ENCODE measurements at regions of chr10 and their contacts with region 1.

Region 1: GRCh38 chr10:12782537-12782936 is 219.0 kb downstream of the CCDC3 start:
- DNase-seq: peak; percentile 65
- ATAC-seq: no peak
- H3K4me3 Mint-ChIP-seq: no peak overlapping the region
- H3K27ac Mint-ChIP-seq: peak overlapping the region; percentile 48
- H3K4me1 Mint-ChIP-seq: peaks cover 38% of the 10 kb centered on the region
- H3K27me3 Mint-ChIP-seq: no peaks in the 10 kb centered on the region

Region 2: DNA sequence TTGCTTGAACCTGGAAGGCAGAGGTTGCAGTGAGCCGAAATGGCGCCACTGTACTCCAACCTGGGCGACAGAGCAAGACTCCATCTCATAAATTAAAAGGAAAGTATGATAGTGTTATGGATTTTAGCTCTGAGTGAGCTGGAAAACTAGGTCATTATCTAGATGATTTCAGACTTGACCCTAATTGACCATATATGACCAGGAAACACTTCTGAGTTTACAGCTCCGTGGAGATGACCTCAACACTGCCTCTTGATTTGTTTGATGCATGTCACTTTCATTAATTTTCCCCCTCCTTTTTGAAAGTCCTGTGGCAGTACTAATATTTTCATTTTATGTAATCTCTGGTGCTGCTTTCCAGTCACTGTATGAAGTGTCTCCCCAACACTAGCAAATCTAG is 660.9 kb before region 1 on chr10:
- CTCF ChIA-PET with region 1: no interaction called
- POLR2A ChIA-PET with region 1: no interaction called
- intact Hi-C with region 1: loop called in 1 of 2 experiments (anchors 2 kb)
- DNase-seq: no peak
- ATAC-seq: no peak
- H3K4me3 Mint-ChIP-seq: peak overlapping the region; percentile 54
- H3K27ac Mint-ChIP-seq: peak overlapping the region; percentile 94
- H3K4me1 Mint-ChIP-seq: peaks cover 32% of the 10 kb centered on the region
- H3K27me3 Mint-ChIP-seq: no peaks in the 10 kb centered on the region

Region 3: GRCh38 chr10:12720217-12720981 is 62.1 kb before region 1 on chr10:
- CTCF ChIA-PET with region 1: interaction called, 3 read pairs
- POLR2A ChIA-PET with region 1: no interaction called
- intact Hi-C with region 1: loop called in 1 of 2 experiments (anchors 2 kb)
- DNase-seq: peak; percentile 77
- ATAC-seq: peak; percentile 86
- H3K4me3 Mint-ChIP-seq: no peak overlapping the region
- H3K27ac Mint-ChIP-seq: peak overlapping the region; percentile 67
- H3K4me1 Mint-ChIP-seq: peaks cover 44% of the 10 kb centered on the region
- H3K27me3 Mint-ChIP-seq: no peaks in the 10 kb centered on the region

Region 4: GRCh38 chr10:12729885-12730284 is 52.7 kb before region 1 on chr10:
- CTCF ChIA-PET with region 1: interaction called, 3 read pairs
- POLR2A ChIA-PET with region 1: no interaction called
- intact Hi-C with region 1: loop called in 1 of 2 experiments (anchors 2 kb)
- DNase-seq: peak; percentile 46
- ATAC-seq: no peak
- H3K4me3 Mint-ChIP-seq: no peak overlapping the region
- H3K27ac Mint-ChIP-seq: no peak overlapping the region
- H3K4me1 Mint-ChIP-seq: peaks cover 14% of the 10 kb centered on the region
- H3K27me3 Mint-ChIP-seq: no peaks in the 10 kb centered on the region

Region 5: DNA sequence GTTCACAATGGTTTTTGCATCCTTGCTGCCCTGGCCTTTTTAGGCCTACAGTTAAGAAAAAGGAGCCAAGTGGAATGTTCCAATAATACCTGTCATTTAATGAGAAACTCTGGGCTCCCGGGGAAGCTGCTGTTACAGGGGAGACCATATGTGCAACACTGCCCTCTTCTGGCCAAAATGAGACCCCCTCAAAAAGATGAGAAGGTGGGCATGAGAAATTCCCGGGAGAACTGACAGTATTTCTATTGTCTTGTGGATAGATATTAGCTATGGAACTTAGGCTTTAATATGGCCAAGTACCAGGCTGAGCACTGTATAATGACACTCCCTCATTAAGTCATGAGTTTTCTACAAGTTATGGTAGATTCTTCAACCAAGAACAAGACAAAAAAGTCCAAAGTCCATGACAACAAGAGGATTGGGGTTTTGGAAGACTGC is 119.6 kb after region 1 on chr10:
- CTCF ChIA-PET with region 1: no interaction called
- POLR2A ChIA-PET with region 1: no interaction called
- intact Hi-C with region 1: loop called in 1 of 2 experiments (anchors 2 kb)
- DNase-seq: peak; percentile 72
- ATAC-seq: peak; percentile 53
- H3K4me3 Mint-ChIP-seq: no peak overlapping the region
- H3K27ac Mint-ChIP-seq: no peak overlapping the region
- H3K4me1 Mint-ChIP-seq: no peaks in the 10 kb centered on the region
- H3K27me3 Mint-ChIP-seq: peaks cover 11% of the 10 kb centered on the region

Region 6: DNA sequence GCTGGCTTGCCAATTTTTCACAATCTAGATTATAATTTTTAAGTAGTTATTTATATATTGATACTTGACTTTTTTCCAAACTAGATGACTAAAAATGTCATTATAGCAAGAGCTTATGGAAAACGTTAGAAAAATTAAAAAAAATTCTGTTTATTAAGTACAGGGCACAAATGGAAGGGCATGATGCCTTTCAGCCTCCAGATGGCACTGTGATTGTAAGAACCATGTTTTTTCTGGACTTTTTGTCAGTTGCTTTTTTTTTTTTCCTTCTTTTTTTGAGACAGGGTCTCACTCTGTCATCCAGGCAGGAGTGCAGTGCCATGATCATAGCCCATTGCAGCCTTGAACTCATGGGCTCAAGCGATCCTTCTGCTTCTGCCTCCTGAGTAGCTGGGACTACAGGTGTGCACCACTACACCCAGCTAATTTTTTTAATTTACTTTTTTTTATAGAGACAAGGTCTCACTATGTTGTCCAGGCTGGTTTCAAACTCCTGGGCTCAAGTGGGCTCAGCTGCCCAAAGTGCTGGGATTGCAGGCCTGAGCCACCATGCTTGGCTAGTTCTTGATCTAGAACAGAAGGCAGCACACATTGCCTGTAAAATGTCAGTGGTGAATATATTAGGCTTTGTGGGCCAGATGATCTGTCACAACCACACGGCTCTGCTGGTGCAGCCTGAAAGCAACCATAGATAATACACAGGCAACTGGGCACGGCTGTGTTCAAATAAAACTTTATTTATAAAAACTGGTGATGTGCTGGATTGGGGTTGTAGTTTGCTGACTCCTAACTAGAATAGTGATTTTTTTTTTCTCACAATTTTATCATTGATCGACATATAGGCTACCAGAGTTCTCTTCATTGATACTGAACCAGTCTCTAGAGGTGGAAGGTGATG is 424.3 kb after region 1 on chr10:
- CTCF ChIA-PET with region 1: no interaction called
- POLR2A ChIA-PET with region 1: no interaction called
- intact Hi-C with region 1: no loop called
- DNase-seq: no peak
- ATAC-seq: no peak
- H3K4me3 Mint-ChIP-seq: no peak overlapping the region
- H3K27ac Mint-ChIP-seq: no peak overlapping the region
- H3K4me1 Mint-ChIP-seq: no peaks in the 10 kb centered on the region
- H3K27me3 Mint-ChIP-seq: no peaks in the 10 kb centered on the region